Heart left ventricle (tissue), 16 donors: ENCODE measurements at regions of chr13 and their contacts with region 1.

Region 1: GRCh38 chr13:23466144-23467002 is 32.9 kb upstream of the SACS start:
- DNase-seq: peak; percentile 75 to 80 (median 77)
- ATAC-seq: peak; percentile 79 to 95 (median 93)
- H3K4me3 ChIP-seq: peak overlapping the region; percentile 37 to 70 (median 57)
- H3K27ac ChIP-seq: peak overlapping the region; percentile 61 to 91 (median 86)
- H3K4me1 ChIP-seq: peaks cover 0 to 33% (median 14%) of the 10 kb centered on the region in 12 donors
- H3K27me3 ChIP-seq: no peaks in the 10 kb centered on the region
- CTCF ChIP-seq: peak in 11 of 12 donors; percentile 37 to 79 (median 57)
- POLR2A ChIP-seq: no peak

Region 2: GRCh38 chr13:23510979-23511735 is 44.8 kb after region 1 on chr13:
- intact Hi-C with region 1: loop called in 2 of 10 experiments (anchors 2 to 5 kb)
- DNase-seq: peak in 1 of 5 donors; percentile 13
- ATAC-seq: peak; percentile 4 to 42 (median 24)
- H3K4me3 ChIP-seq: no peak overlapping the region
- H3K27ac ChIP-seq: peak overlapping the region in 8 of 12 donors; percentile 14 to 78 (median 40)
- H3K4me1 ChIP-seq: peaks cover 0 to 48% (median 19%) of the 10 kb centered on the region in 12 donors
- H3K27me3 ChIP-seq: no peaks in the 10 kb centered on the region
- CTCF ChIP-seq: peak in 9 of 12 donors; percentile 15 to 56 (median 44)
- POLR2A ChIP-seq: no peak

Region 3: DNA sequence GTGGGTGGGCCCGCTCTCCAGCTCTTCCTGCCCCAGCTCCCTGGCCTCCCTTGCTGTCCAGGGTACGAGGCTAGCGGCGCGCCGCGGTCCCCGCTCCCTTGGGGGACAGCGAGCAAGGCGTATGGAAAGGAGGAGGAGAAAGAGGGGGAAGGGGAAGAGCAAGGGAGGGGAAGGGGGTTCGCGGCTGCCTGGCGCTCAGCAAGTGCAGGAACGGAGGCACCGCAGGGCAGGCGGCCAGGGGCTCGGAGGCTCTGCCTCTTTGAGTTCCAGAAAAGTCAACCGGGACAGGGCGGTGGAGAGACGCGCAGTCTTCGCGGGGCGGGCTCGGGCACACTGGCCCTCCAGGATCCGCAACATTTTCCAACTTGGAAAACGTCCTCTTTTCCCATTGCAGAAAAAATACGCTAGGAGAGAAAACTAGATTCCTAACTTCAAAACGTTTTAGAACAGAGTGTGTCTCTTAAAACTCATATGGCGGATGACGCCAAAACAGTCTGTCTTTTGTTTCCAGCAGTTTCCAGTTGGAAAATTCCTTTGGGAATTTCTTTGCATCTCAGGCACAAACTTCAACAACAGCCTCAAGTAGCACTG is 80.7 kb after region 1 on chr13:
- intact Hi-C with region 1: loop called in 1 of 10 experiments (anchors 1 kb)
- DNase-seq: peak; percentile 58 to 81 (median 77)
- ATAC-seq: peak; percentile 61 to 85 (median 79)
- H3K4me3 ChIP-seq: peak overlapping the region; percentile 6 to 63 (median 54)
- H3K27ac ChIP-seq: peak overlapping the region; percentile 62 to 88 (median 77)
- H3K4me1 ChIP-seq: peaks cover 0 to 29% (median 7%) of the 10 kb centered on the region in 12 donors
- H3K27me3 ChIP-seq: no peaks in the 10 kb centered on the region
- CTCF ChIP-seq: no peak
- POLR2A ChIP-seq: no peak

Region 4: DNA sequence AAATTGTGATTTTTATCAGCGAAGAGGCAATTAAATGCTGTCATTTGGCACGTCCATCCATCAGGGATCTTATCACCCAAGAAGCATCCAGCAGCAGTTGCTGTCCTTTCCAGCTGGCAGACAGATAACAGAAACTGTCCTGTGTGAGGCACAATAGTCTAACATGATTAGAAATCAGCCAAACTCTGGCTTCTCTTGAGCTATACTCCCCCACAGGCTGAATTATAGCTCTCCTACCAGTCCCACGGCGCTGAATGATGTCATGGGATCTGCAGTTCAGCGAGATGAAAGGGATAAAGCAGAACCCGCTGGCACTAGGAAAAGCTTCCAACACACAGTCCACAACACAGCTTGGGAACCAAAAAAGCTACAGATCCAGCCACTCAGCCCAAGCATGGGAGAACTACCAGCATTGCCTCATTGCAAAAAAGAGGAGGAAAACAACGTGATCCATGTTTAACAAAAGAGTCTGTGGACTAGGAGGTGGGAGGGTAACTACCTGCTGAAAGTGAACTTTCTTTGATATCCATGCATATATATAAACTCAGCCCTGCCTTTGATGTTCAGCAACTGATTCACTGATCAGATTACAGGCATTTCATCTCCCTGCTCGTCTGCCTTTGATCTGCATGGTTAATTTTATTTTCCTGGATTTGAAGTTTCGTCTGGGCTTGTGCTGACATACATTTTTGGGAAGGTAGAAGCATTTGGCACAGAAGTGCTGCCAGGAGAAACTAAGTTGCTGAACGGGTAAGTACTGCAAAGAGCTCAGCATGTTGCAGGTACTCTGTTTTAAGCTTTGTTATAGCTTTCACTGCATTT is 103.9 kb after region 1 on chr13 and contains the start of gene TNFRSF19:
- intact Hi-C with region 1: loop called (anchors 2 to 5 kb)
- DNase-seq: peak in 4 of 5 donors; percentile 62 to 84 (median 70)
- ATAC-seq: peak; percentile 68 to 93 (median 86)
- H3K4me3 ChIP-seq: peak within 1 kb of the TSS; percentile 18 to 63 (median 54)
- H3K27ac ChIP-seq: peak within 1 kb of the TSS; percentile 58 to 86 (median 73)
- H3K4me1 ChIP-seq: peaks cover 0 to 19% (median 0%) of the 10 kb centered on the region in 12 donors
- H3K27me3 ChIP-seq: no peaks in the 10 kb centered on the region
- CTCF ChIP-seq: no peak
- POLR2A ChIP-seq: no peak
- total RNA-seq, gene TNFRSF19: 12.0 to 35.7 (median 28.0) TPM

Region 5: DNA sequence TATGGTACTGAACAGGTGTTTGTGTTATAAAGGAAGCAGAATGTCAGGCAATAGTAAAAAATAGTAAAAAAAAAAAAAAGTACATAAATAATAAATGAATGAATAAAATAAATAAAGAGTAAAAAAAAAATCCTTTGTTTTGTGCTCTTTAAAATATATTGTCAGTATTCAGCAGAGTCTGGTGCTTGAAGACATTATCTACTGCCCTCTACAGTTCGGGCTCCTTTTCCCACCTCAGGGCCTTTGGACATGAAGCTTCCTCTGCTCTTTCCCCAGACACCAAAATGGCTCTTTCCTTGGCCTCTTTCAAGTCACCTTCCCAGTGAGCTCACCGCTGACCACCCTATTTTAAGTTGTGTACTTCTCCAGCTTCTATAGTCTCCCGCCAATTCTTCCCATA is 241.3 kb after region 1 on chr13:
- intact Hi-C with region 1: loop called in 6 of 10 experiments (anchors 2 to 10 kb)
- DNase-seq: no peak
- ATAC-seq: no peak
- H3K4me3 ChIP-seq: no peak overlapping the region
- H3K27ac ChIP-seq: no peak overlapping the region
- H3K4me1 ChIP-seq: peaks cover 0 to 19% (median 8%) of the 10 kb centered on the region in 12 donors
- H3K27me3 ChIP-seq: no peaks in the 10 kb centered on the region
- CTCF ChIP-seq: peak in 7 of 12 donors; percentile 5 to 40 (median 25)
- POLR2A ChIP-seq: no peak

Region 6: GRCh38 chr13:23715762-23716235 is 249.4 kb after region 1 on chr13:
- intact Hi-C with region 1: loop called in 1 of 10 experiments (anchors 10 kb)
- DNase-seq: no peak
- ATAC-seq: peak; percentile 24 to 65 (median 40)
- H3K4me3 ChIP-seq: no peak overlapping the region
- H3K27ac ChIP-seq: no peak overlapping the region
- H3K4me1 ChIP-seq: peaks cover 0 to 3% (median 0%) of the 10 kb centered on the region in 12 donors
- H3K27me3 ChIP-seq: no peaks in the 10 kb centered on the region
- CTCF ChIP-seq: peak in 6 of 12 donors; percentile 13 to 26 (median 22)
- POLR2A ChIP-seq: no peak

Region 7: DNA sequence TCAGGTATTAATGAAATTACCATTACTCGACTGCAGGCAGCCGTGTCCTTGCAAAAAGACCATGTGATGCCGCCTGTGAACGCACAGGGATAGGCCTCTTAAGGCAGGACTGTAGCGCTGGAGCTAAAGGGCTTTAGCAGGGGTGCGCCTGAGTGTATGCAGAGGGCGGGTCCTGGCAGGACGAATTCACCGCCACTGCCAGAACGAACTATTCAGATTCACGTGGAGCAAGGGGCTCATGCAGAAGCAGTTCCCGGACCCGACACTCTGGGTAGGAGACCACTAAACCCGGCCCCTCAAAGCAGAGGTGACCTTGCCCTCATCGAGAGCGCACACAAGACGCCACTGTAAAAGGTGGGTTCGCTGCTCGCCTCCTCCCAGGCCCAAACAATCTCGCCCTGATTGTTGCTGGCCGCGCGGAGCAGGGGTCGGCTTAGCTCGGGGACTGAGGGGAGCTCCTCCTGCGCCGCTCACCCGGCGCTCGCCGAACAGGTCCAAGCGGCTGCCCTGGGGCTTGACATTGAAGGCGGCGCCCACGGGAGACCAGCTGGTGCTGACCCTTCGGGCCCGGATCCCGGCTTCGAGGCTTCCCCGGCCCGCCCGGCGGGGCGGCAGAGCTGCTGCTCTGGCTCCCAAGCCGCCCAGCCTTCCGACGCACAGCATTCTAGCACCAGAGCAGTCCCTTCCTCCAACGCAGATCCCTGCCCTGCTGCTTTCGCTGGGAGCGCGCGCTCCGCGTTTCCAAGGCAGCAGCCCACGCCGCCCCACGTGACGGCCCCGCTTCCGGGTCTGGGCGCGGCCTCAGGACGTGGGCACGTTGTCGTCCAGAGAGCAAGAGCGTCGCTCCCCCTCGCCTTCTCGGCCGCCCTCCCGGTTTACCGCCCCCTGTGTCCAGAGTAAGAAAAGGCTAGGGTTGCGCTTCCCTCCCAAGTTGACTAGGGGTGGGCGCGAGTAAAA is 422.6 kb after region 1 on chr13 and contains the start of gene MIPEP:
- intact Hi-C with region 1: loop called in 1 of 10 experiments (anchors 5 kb)
- DNase-seq: peak; percentile 94 to 97 (median 94)
- ATAC-seq: peak; percentile 98 to 99 (median 98)
- H3K4me3 ChIP-seq: peak within 1 kb of the TSS; percentile 67 to 100 (median 93)
- H3K27ac ChIP-seq: peak within 1 kb of the TSS; percentile 51 to 92 (median 84)
- H3K4me1 ChIP-seq: peaks cover 0 to 26% (median 10%) of the 10 kb centered on the region in 12 donors
- H3K27me3 ChIP-seq: no peaks in the 10 kb centered on the region
- CTCF ChIP-seq: peak; percentile 60 to 95 (median 76)
- POLR2A ChIP-seq: peak; percentile 13 to 68
- total RNA-seq, gene MIPEP: 21.5 to 88.1 (median 42.1) TPM